CD8-positive, alpha-beta memory T cell (primary cell): ENCODE measurements at regions of chr3 and their contacts with region 1.

Region 1: GRCh38 chr3:3200632-3201212 is 21.2 kb upstream of the CRBN start:
- DNase-seq: peak in 1 of 5 donors; percentile 21
- H3K4me3 ChIP-seq: no peak overlapping the region
- H3K4me3 Mint-ChIP-seq: peak overlapping the region in 6 of 7 donors; percentile 3 to 87 (median 40)
- H3K27ac ChIP-seq: no peak overlapping the region
- H3K27ac Mint-ChIP-seq: peak overlapping the region in 1 of 8 donors; percentile 71
- H3K4me1 ChIP-seq: peaks cover 5% of the 10 kb centered on the region
- H3K4me1 Mint-ChIP-seq: peaks cover 18 to 23% (median 23%) of the 10 kb centered on the region in 3 donors
- H3K27me3 ChIP-seq: no peaks in the 10 kb centered on the region
- H3K27me3 Mint-ChIP-seq: peaks cover 0 to 1% of the 10 kb centered on the region in 2 donors

Region 2: DNA sequence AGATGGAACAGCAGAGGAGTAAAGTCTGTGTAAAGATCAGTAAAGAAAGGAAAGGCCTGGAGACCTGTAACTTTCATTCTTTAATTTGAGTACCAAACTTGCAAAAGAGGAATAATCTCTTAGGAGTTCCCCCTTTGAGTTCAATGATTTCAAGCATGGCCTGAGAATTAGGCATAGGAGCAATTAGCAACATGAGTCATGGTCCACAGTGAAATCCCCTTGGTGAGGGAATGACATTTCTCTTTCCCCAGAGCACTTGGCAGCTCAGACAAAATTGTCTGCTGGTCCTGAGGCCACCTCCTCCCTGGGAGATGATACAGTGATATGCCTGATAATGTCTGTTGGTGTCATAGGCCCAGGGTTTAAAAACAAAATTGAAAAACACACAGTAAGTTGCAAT is 60.1 kb after region 1 on chr3:
- CTCF ChIA-PET with region 1: no interaction called
- POLR2A ChIA-PET with region 1: no interaction called
- DNase-seq: no peak
- H3K4me3 ChIP-seq: no peak overlapping the region
- H3K4me3 Mint-ChIP-seq: no peak overlapping the region
- H3K27ac ChIP-seq: no peak overlapping the region
- H3K27ac Mint-ChIP-seq: no peak overlapping the region
- H3K4me1 ChIP-seq: no peaks in the 10 kb centered on the region
- H3K4me1 Mint-ChIP-seq: no peaks in the 10 kb centered on the region
- H3K27me3 ChIP-seq: no peaks in the 10 kb centered on the region
- H3K27me3 Mint-ChIP-seq: peaks cover 0 to 25% of the 10 kb centered on the region in 2 donors

Region 3: DNA sequence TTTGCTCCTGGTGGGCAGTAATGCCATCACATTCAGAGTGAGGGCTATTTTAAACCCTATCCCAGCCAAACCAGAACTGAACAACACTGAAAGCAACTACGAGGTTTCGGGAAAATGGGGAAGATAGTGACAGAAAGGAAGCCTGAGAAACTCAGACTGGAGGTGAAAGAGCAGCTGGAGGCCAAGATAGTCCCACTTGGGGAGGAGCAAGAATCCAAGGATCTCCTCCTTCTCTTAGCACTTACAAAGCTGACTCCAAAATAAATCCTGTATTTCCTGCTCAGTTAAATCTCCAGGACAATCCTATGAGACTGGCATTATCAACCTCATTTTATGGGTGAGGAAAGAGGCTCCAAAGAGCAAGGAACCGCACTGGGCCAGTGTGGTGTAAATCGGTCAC is 1088.3 kb after region 1 on chr3:
- CTCF ChIA-PET with region 1: interaction called, 12 read pairs
- POLR2A ChIA-PET with region 1: no interaction called
- DNase-seq: no peak
- H3K4me3 ChIP-seq: no peak overlapping the region
- H3K4me3 Mint-ChIP-seq: no peak overlapping the region
- H3K27ac ChIP-seq: no peak overlapping the region
- H3K27ac Mint-ChIP-seq: no peak overlapping the region
- H3K4me1 ChIP-seq: peaks cover 9% of the 10 kb centered on the region
- H3K4me1 Mint-ChIP-seq: peaks cover 7 to 13% (median 12%) of the 10 kb centered on the region in 3 donors
- H3K27me3 ChIP-seq: no peaks in the 10 kb centered on the region
- H3K27me3 Mint-ChIP-seq: peaks cover 3 to 11% of the 10 kb centered on the region in 2 donors